Calu3 (cell line): ENCODE measurements at regions of chr1 and their contacts with region 1.

Region 1: GRCh38 chr1:64675718-64676345 is 69.0 kb upstream of the RAVER2 start:
- DNase-seq: no peak
- H3K4me3 Mint-ChIP-seq: no peak overlapping the region
- H3K27ac Mint-ChIP-seq: no peak overlapping the region
- H3K4me1 Mint-ChIP-seq: no peaks in the 10 kb centered on the region
- H3K27me3 Mint-ChIP-seq: no peaks in the 10 kb centered on the region
- CTCF ChIP-seq: no peak

Region 2: DNA sequence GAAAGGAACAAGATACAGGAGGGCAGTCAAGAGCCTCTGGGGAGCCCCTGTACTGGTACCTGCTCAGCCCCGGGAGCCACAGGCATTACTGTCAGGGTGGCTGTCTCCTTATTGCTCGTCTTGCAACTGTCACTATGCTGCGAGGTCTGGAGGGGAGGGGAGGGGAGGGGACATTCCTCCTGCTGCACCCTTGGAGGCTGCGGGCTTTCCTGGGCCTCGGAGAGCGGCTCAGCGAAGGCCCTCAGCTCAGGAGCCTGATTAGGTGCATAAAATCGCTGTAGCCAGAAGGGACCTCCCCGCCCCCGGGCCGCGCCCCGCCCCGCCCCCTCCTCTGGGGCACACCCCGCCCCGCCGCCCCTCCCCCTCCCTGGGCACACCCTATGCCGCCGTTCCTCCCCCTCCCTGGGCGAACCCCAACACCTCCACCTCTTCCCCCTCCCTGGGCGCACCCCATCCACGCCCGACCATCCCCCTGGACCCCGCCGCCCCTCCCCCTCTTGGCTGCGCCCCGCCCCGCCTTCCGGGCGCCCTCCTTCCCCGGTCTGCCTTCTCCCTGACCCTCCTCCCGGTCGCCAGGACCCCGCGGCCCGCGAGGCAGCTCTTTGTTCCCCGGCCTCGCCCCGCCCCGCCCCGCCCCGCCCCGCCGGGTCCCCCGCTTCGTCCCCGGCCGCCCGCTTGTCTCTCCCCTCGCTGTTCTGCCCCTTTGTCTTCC is 170.4 kb before region 1 on chr1:
- CTCF ChIA-PET with region 1: no interaction called
- intact Hi-C with region 1: loop called (anchors 10 kb)
- DNase-seq: peak; percentile 37
- H3K4me3 Mint-ChIP-seq: peak overlapping the region; percentile 84
- H3K27ac Mint-ChIP-seq: peak overlapping the region; percentile 83
- H3K4me1 Mint-ChIP-seq: peaks cover 22% of the 10 kb centered on the region
- H3K27me3 Mint-ChIP-seq: peaks cover 12% of the 10 kb centered on the region
- CTCF ChIP-seq: no peak

Region 3: DNA sequence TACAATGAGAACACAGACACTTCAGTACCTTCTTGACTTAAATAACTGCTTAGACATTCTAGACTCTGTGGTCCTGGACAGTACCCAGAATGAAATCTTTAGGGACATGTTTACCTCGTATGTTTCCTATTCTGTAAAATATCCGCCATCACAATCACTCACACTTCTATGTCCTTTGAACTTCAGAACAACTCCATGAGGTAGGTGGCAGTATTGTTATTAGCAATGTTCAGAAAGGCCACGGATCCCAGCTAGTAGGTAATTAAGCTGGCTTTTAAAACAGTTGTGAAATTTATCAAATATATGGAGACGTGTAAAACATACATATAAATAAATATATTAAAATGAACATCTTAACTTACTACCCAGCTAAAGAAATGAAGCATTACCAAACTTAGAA is 122.6 kb before region 1 on chr1:
- CTCF ChIA-PET with region 1: interaction called, 7 read pairs
- intact Hi-C with region 1: loop called (anchors 1 kb)
- DNase-seq: no peak
- H3K4me3 Mint-ChIP-seq: no peak overlapping the region
- H3K27ac Mint-ChIP-seq: no peak overlapping the region
- H3K4me1 Mint-ChIP-seq: no peaks in the 10 kb centered on the region
- H3K27me3 Mint-ChIP-seq: no peaks in the 10 kb centered on the region
- CTCF ChIP-seq: no peak